B cell (primary cell): ENCODE measurements at regions of chr10 and their contacts with region 1.

Region 1: DNA sequence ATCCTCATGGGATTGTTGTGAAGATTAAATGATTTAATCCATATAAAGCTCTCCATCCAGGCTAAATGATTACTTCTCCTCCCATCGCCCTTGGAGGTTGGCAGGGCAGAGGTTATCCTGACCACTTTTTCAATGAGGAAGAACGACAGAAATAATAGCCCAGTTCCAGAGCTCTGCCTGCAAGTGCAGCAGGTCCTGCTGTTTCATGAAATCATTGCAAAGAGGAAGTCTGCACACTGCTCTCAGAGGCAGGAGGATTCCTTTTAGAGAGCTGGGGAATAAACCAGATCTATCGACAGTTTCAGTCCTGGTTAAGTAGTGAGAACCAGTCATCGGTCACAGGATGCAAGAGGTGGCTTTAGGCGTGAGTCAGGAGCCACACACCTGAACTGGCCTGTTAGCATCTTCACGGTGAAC is 25.0 kb upstream of the CDH23 start:
- DNase-seq: peak; percentile 46
- ATAC-seq: peak; percentile 32
- H3K4me3 ChIP-seq: no peak overlapping the region
- H3K4me3 Mint-ChIP-seq: peak overlapping the region; percentile 57
- H3K27ac ChIP-seq: peak overlapping the region; percentile 75 to 78
- H3K27ac Mint-ChIP-seq: peak overlapping the region; percentile 91
- H3K4me1 ChIP-seq: peaks cover 35 to 46% of the 10 kb centered on the region in 2 donors
- H3K4me1 Mint-ChIP-seq: peaks cover 39% of the 10 kb centered on the region
- H3K27me3 ChIP-seq: no peaks in the 10 kb centered on the region
- H3K27me3 Mint-ChIP-seq: no peaks in the 10 kb centered on the region
- CTCF ChIP-seq: no peak

Region 2: GRCh38 chr10:70918851-70919530 is 452.8 kb before region 1 on chr10:
- CTCF ChIA-PET with region 1: no interaction called
- POLR2A ChIA-PET with region 1: no interaction called
- intact Hi-C with region 1: no loop called
- DNase-seq: no peak
- ATAC-seq: no peak
- H3K4me3 ChIP-seq: no peak overlapping the region
- H3K4me3 Mint-ChIP-seq: no peak overlapping the region
- H3K27ac ChIP-seq: no peak overlapping the region
- H3K27ac Mint-ChIP-seq: no peak overlapping the region
- H3K4me1 ChIP-seq: no peaks in the 10 kb centered on the region
- H3K4me1 Mint-ChIP-seq: no peaks in the 10 kb centered on the region
- H3K27me3 ChIP-seq: peaks cover 0 to 3% (median 0%) of the 10 kb centered on the region in 4 experiments
- H3K27me3 Mint-ChIP-seq: peaks cover 22% of the 10 kb centered on the region
- CTCF ChIP-seq: no peak

Region 3: GRCh38 chr10:70958396-70958795 is 413.4 kb before region 1 on chr10:
- CTCF ChIA-PET with region 1: no interaction called
- POLR2A ChIA-PET with region 1: no interaction called
- intact Hi-C with region 1: no loop called
- DNase-seq: no peak
- ATAC-seq: no peak
- H3K4me3 ChIP-seq: no peak overlapping the region
- H3K4me3 Mint-ChIP-seq: no peak overlapping the region
- H3K27ac ChIP-seq: no peak overlapping the region
- H3K27ac Mint-ChIP-seq: no peak overlapping the region
- H3K4me1 ChIP-seq: no peaks in the 10 kb centered on the region
- H3K4me1 Mint-ChIP-seq: no peaks in the 10 kb centered on the region
- H3K27me3 ChIP-seq: peaks cover 0 to 3% (median 0%) of the 10 kb centered on the region in 4 experiments
- H3K27me3 Mint-ChIP-seq: peaks cover 9% of the 10 kb centered on the region
- CTCF ChIP-seq: no peak

Region 4: GRCh38 chr10:71092812-71093401 is 278.9 kb before region 1 on chr10:
- CTCF ChIA-PET with region 1: no interaction called
- POLR2A ChIA-PET with region 1: no interaction called
- intact Hi-C with region 1: no loop called
- DNase-seq: no peak
- ATAC-seq: no peak
- H3K4me3 ChIP-seq: no peak overlapping the region
- H3K4me3 Mint-ChIP-seq: no peak overlapping the region
- H3K27ac ChIP-seq: no peak overlapping the region
- H3K27ac Mint-ChIP-seq: no peak overlapping the region
- H3K4me1 ChIP-seq: no peaks in the 10 kb centered on the region
- H3K4me1 Mint-ChIP-seq: no peaks in the 10 kb centered on the region
- H3K27me3 ChIP-seq: peaks cover 0 to 4% (median 0%) of the 10 kb centered on the region in 4 experiments
- H3K27me3 Mint-ChIP-seq: peaks cover 20% of the 10 kb centered on the region
- CTCF ChIP-seq: no peak

Region 5: DNA sequence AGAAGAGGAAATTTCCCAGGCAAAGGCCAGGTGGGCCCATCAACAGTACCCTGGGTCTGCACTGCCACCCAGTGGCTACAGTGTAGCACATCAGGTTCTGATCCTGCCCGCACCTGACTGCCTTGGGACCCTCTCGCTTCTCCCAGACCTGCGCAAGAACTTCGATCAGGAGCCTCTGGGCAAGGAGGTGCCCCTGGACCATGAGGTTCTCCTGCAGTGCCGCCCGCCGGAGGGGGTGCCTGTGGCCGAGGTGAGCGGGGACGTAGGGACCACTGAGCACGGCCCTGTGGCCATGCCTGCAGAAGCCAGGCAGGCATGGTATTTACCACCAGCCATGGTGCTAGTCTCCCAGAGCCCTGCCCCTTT is 86.6 kb before region 1 on chr10:
- CTCF ChIA-PET with region 1: no interaction called
- POLR2A ChIA-PET with region 1: no interaction called
- intact Hi-C with region 1: no loop called
- DNase-seq: peak; percentile 42
- ATAC-seq: peak; percentile 56
- H3K4me3 ChIP-seq: no peak overlapping the region
- H3K4me3 Mint-ChIP-seq: no peak overlapping the region
- H3K27ac ChIP-seq: no peak overlapping the region
- H3K27ac Mint-ChIP-seq: no peak overlapping the region
- H3K4me1 ChIP-seq: no peaks in the 10 kb centered on the region
- H3K4me1 Mint-ChIP-seq: peaks cover 5% of the 10 kb centered on the region
- H3K27me3 ChIP-seq: no peaks in the 10 kb centered on the region
- H3K27me3 Mint-ChIP-seq: no peaks in the 10 kb centered on the region
- CTCF ChIP-seq: peak; percentile 70

Region 6: DNA sequence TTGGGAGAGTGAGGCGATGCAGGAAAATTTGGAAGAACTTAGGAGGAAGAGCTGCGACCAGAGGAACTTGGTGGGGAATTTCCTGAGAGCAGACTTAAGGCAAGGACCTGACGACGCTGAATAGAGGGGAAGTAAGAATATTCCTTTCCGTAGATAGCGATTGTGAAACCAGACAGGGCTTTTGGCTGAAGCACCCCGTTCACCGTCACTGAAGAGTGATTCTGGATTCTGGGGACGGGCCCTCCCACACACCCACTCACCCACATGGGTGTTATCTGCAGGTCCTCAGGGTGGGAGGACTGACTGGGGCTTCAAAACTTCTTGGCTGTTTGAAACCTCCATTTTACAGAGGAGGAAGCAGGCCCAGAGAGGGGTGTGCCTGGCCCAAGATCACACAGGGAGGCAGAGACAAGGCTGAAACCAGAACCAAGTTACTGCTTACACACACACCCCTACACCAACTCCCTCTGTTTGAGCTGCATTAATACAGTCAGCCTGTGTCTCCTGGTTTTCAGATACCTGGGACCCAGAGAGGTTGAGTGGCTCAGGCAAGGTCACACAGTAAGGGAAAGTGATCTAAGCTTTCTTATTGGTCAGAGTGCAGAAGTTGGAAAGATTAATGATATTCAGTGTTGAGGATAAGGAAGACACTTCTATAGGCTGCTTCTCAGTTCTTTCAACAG is 12.3 kb before region 1 on chr10:
- CTCF ChIA-PET with region 1: interaction called, 3 read pairs
- POLR2A ChIA-PET with region 1: interaction called, 8 read pairs
- intact Hi-C with region 1: loop called (anchors 2 kb)
- DNase-seq: peak; percentile 69
- ATAC-seq: peak; percentile 78
- H3K4me3 ChIP-seq: peak overlapping the region in 1 of 5 experiments; percentile 14
- H3K4me3 Mint-ChIP-seq: peak overlapping the region; percentile 61
- H3K27ac ChIP-seq: peak overlapping the region; percentile 34 to 60
- H3K27ac Mint-ChIP-seq: peak overlapping the region; percentile 92
- H3K4me1 ChIP-seq: peaks cover 12 to 31% of the 10 kb centered on the region in 2 donors
- H3K4me1 Mint-ChIP-seq: peaks cover 25% of the 10 kb centered on the region
- H3K27me3 ChIP-seq: no peaks in the 10 kb centered on the region
- H3K27me3 Mint-ChIP-seq: no peaks in the 10 kb centered on the region
- CTCF ChIP-seq: no peak